Head of caudate nucleus (tissue), 42 donors: ENCODE measurements at regions of chr1 and their contacts with region 1.

Region 1: GRCh38 chr1:34162852-34163766 is 1.9 kb downstream of the CSMD2 start:
- DNase-seq: peak; percentile 77 to 94 (median 89)

Region 2: DNA sequence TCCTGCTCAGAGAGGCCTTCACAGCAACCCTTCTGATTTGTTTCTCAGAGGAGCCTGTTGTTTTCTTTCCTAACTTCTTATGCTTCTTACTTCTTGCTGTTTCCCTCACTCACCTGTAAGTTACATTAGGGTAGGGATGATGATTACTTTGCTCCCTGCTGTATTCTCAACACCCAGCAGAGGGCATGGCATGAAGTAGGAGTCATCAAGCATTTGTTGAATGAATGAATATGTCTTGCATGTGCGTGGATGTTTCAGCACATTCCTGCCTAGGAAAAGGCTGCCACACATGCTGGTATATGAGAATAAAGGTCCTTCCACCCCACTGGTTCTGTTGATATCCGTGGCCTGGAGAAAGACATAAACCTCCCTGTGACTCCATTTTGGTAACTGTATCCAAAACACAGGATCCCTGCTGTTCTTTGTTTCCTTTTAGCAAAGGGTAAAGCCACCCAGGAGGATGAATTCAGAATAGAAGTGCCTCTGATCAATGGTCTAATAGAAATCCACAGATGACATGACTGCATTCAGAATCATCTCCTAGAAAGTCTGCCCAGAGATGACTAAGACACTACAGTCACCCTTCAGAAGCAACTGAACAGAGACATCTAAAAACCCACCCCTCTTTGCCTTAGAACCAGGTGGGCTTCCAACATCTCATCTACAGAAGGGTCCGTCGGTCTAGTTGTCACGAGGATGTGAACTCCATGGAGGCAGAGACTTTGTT is 521.8 kb before region 1 on chr1:
- intact Hi-C with region 1: loop called (anchors 10 kb)
- DNase-seq: peak in 35 of 42 donors; percentile 14 to 77 (median 47)

Region 3: DNA sequence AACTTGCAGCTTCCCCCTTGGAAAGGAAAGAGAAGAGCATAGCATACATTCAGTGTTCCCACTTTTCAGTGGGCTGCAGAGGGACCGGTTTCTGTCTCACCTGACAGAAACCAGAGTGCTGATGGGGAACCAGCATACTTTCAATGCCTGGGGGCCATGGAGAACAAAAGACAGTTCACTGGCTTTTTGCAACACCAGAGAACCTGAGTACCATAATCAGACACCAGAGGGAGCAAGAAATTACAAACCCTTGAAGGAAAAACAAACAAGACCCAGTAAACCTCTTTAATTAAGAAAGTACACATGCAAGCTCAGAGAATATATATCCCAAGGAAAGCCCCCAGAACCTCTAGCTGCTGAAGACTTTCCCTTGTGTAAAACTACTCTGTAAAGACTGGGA is 49.2 kb before region 1 on chr1:
- intact Hi-C with region 1: loop called (anchors 5 kb)
- DNase-seq: peak in 4 of 42 donors; percentile 17 to 55 (median 30)

Region 4: DNA sequence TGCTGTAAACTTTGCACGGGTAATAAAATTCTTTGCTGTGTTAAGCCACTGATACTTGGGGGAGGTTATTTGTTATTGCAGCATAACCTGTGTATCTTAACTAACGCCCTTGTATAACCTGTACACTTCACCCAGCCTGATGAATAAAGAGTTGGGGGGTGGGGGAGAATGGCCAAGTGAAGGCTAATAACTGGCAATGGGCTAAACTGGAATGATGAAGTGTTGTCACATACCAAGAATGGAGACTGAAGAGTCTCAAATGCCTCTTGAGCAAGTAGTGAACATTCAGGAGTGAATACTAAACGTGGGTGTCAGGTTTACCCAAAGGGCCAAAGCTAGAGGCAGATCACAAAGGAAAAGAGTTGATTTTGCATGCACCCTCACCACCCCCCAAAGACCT is 183.0 kb after region 1 on chr1:
- intact Hi-C with region 1: no loop called
- DNase-seq: no peak